ENCODE measurements at regions of chr2 and their contacts with region 1.

Region 1: DNA sequence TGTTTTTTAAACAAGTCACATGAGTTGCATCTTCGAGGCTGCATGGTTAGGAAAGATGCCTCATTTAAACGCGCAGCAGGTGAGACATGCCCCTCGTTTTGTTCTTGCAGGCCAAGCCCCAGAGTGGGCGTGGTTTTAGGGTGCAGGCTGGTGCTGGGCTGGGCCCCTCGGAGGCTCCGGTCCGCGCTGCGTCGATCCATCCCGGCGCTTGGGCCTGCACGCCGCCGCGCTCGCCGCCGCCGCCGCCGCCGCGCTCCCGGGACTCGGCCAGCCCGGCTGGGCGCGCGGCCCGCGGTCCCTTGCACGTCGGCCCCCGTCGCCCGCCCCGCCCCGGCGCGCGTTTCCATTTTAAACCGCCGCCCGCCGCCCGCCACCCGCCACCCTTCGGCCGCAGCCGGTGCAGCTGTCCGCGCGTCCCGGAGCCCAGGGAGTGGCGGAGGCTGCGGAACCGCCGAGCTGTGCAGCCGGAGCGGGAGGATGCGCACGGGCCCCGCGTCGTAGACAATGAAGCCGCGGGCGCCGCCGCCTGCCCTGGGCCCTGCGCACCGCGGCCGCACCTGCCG is 175.5 kb downstream of the AGAP1 start:
- DNase-seq: peak; percentile 58
- ATAC-seq: peak; percentile 82
- H3K4me3 ChIP-seq: peak overlapping the region; percentile 80
- H3K27ac ChIP-seq: no peak overlapping the region
- H3K4me1 ChIP-seq: peaks cover 13% of the 10 kb centered on the region
- H3K27me3 ChIP-seq: no peaks in the 10 kb centered on the region; the same call in 1 of the 2 replicates
- CTCF ChIP-seq: no peak
- POLR2A ChIP-seq: no peak
- RAD21 ChIP-seq: no peak

Region 2: DNA sequence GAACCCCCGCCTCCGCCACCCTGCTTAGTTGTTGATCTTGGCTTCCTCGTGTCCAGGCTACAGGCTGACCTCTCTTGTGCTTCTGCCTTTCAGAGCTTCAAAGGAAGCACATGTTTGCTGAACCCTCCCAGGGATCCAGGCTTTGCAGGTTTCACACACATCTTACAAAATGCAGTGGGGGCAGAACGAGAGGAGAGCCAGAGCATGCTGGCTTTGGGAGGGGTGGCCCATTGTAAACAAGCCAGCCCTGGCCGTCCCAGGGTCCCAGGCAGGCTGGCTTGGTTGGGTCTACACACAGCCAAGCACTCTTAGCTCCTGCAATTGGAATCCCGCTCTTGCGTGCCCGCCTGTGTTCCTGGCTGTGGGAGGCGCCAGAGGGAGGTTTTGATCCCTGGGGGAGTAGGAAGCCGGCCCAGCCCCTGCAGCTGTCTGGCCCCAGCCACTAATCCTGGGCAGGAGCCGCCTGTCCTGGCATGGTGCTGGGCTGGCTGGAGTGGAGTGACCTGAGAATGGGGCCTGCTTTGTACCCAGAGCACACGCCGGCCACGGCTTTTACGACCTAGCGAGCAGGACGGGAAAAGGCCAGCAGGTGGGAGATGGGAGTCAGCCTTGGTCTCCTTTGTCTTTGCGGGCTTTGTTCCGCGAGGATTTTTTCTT is 663.6 kb before region 1 on chr2:
- CTCF ChIA-PET with region 1: no interaction called
- POLR2A ChIA-PET with region 1: no interaction called
- dilution Hi-C with region 1: no loop called
- in situ Hi-C with region 1: no loop called
- intact Hi-C with region 1: no loop called
- DNase-seq: no peak
- ATAC-seq: peak; percentile 6
- H3K4me3 ChIP-seq: no peak overlapping the region
- H3K27ac ChIP-seq: peak overlapping the region; percentile 10
- H3K4me1 ChIP-seq: peaks cover 58% of the 10 kb centered on the region
- H3K27me3 ChIP-seq: no peaks in the 10 kb centered on the region
- CTCF ChIP-seq: 0 out of 2 replicates have a peak, but pooled peaks have one; percentile 6
- POLR2A ChIP-seq: no peak
- RAD21 ChIP-seq: no peak

Region 3: DNA sequence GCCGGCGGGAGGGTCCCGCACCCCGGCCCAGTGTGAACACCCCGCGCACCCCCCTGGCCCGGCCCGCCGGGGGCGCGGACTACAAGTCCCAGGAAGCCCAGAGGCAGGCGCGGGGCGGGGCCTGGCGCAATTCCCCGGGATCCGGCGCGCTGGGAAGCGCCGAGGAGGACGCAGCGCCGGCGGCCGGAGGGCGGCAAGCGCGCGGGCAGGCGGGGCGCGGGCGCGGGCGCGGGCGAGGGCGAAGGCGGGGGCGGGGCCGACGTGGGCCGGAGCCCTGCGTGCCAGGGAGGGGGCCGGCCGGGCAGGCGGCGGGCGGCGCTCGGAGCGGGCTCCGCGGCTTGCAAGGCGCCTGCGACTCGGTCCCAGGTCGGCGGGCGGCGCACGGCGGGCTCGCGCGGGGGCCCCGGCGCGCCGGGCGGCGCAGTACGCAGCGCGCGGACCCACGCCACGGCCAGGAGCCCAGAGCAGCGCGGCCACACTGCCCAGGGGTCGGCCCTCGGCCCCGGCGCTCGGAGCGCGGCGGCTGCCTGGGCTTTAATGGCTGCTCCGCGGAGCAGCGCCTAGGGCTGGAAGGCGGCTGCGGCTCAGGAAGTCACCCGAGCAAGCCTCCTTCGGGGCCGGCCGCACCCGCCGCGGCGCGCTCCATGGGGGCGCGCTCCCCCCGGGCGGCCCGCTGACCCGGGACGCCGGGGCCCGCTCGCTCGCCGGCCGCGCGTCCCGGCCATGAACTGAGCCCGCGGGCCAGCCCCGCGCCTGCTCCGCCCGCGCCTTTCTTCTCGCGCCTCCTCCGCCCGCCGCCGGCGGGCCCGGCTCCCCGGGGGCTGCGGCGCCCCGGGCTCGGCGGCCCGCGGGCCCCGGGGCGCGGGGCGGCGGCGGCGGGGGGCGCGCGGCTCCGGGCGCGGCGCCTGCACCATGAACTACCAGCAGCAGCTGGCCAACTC is 175.3 kb before region 1 on chr2 and contains the start of gene AGAP1:
- CTCF ChIA-PET with region 1: no interaction called
- POLR2A ChIA-PET with region 1: no interaction called
- dilution Hi-C with region 1: no loop called
- in situ Hi-C with region 1: no loop called
- intact Hi-C with region 1: loop called (anchors 2 kb)
- DNase-seq: peak; percentile 80
- ATAC-seq: peak; percentile 89
- H3K4me3 ChIP-seq: peak within 1 kb of the TSS; percentile 99
- H3K27ac ChIP-seq: peak within 1 kb of the TSS; percentile 72
- H3K4me1 ChIP-seq: peaks cover 11% of the 10 kb centered on the region
- H3K27me3 ChIP-seq: 0 out of 2 replicates have a peak, but pooled peaks cover 2% of the 10 kb centered on the region
- CTCF ChIP-seq: no peak
- POLR2A ChIP-seq: no peak
- RAD21 ChIP-seq: no peak
- total RNA-seq, gene AGAP1: 11.7 and 15.1 TPM in 2 replicates

Region 4: GRCh38 chr2:235605312-235606003 is 63.9 kb before region 1 on chr2:
- CTCF ChIA-PET with region 1: interaction called, 8 read pairs
- POLR2A ChIA-PET with region 1: no interaction called
- dilution Hi-C with region 1: no loop called
- in situ Hi-C with region 1: loop called (anchors 5 kb)
- intact Hi-C with region 1: loop called (anchors 2 kb)
- DNase-seq: peak; percentile 94
- ATAC-seq: peak; percentile 98
- H3K4me3 ChIP-seq: no peak overlapping the region
- H3K27ac ChIP-seq: no peak overlapping the region
- H3K4me1 ChIP-seq: peaks cover 6% of the 10 kb centered on the region
- H3K27me3 ChIP-seq: no peaks in the 10 kb centered on the region
- CTCF ChIP-seq: no peak
- POLR2A ChIP-seq: no peak
- RAD21 ChIP-seq: no peak

Region 5: DNA sequence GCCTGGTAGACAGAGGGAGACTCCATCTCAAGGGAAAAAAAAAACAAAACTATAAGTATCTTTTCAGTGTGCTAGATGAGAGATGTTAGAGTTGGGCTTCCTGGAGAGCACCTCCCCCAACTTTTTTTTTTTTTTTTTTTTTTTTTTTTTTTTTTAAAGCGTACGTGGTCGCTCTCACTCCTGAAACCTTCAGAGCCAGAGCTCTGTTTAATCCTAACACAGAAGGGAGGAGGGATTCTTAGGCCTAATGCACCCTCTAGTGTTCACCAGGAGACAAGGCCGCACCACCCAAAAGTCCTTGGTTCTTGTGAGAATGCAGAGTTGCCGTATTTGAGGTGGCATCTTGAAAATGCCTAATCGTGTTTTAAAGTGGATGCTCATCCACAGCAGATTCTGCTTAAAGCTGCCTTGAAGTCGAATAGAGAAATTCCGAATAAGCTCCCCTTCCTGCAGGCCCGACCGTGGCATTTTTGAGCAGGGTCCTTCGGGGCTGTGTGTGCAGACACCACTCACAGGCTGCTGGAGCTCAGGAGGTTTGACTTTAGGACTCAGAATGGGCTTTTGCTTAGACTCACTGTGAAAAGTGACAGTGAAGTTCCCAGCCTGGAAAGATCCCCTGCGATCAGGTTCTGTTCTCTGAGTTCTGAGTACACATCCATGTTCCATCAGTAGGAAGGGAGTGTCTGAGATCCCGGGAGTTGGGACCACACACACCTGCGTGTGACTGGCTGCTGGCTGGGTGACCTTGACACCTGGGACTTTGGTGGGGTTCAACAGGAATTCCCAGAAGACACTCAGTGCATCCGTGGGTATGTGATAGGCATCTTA is 77.1 kb after region 1 on chr2:
- CTCF ChIA-PET with region 1: interaction called, 4 read pairs
- POLR2A ChIA-PET with region 1: no interaction called
- dilution Hi-C with region 1: no loop called
- in situ Hi-C with region 1: no loop called
- intact Hi-C with region 1: loop called (anchors 1 kb)
- DNase-seq: peak; percentile 90
- ATAC-seq: peak; percentile 88
- H3K4me3 ChIP-seq: no peak overlapping the region
- H3K27ac ChIP-seq: no peak overlapping the region
- H3K4me1 ChIP-seq: peaks cover 8% of the 10 kb centered on the region
- H3K27me3 ChIP-seq: no peaks in the 10 kb centered on the region
- CTCF ChIP-seq: peak; percentile 94
- POLR2A ChIP-seq: no peak
- RAD21 ChIP-seq: peak; percentile 97

Region 6: GRCh38 chr2:236107942-236108625 is 438.7 kb after region 1 on chr2:
- CTCF ChIA-PET with region 1: no interaction called
- POLR2A ChIA-PET with region 1: no interaction called
- dilution Hi-C with region 1: no loop called
- in situ Hi-C with region 1: no loop called
- intact Hi-C with region 1: no loop called
- DNase-seq: no peak
- ATAC-seq: no peak
- H3K4me3 ChIP-seq: no peak overlapping the region
- H3K27ac ChIP-seq: no peak overlapping the region
- H3K4me1 ChIP-seq: no peaks in the 10 kb centered on the region
- H3K27me3 ChIP-seq: no peaks in the 10 kb centered on the region
- CTCF ChIP-seq: no peak
- POLR2A ChIP-seq: no peak
- RAD21 ChIP-seq: no peak